ENCODE measurements at regions of chr7 and their contacts with region 1.

Region 1: DNA sequence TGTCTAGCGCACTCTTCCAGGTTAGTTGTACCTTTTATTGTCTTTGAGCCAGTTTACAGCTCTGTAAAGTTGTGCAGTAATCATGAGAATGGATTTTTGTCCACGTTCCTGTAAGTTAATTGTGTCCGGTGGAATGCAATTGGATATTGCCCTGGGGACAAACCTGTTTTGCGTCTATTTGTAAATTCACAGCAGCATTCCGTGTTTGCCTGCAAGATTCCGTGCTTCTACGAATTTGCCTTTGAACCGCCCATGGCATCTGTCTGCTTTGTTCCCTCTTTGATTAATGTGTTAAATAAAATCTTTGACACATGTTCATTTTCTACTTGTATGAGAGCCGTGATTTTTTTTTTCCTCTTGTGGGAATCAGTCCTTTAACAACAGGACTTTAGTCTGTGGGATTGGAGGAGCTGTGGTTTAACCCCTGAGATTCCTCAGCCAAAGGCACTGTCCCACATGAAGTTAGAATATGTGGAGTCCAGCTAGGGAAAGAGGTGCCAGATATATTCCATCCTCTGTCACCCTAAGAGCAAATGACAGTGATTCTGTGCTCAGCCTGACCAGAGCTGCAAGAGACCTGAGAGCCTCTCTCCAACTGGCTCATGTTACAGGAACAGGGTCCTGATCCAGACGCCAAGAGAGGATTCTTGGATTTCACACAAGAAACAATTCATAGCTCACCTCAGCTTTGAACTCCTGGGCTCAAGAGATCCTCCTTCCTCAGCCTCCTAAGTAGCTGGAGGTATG is 126.3 kb downstream of the COL26A1 start:
- DNase-seq: peak; percentile 62 to 78
- H3K4me3 ChIP-seq: no peak overlapping the region
- H3K27ac ChIP-seq: no peak overlapping the region
- H3K4me1 ChIP-seq: peaks cover 8% of the 10 kb centered on the region; the same call in 1 of the 2 replicates
- H3K27me3 ChIP-seq: peaks cover 19% of the 10 kb centered on the region; the same call in 1 of the 2 replicates
- CTCF ChIP-seq: no peak

Region 2: GRCh38 chr7:101308245-101309085 is 180.5 kb before region 1 on chr7:
- CTCF ChIA-PET with region 1: interaction called, 10 read pairs
- POLR2A ChIA-PET with region 1: no interaction called
- intact Hi-C with region 1: no loop called
- DNase-seq: peak; percentile 74 to 76
- H3K4me3 ChIP-seq: peak overlapping the region; percentile 95
- H3K27ac ChIP-seq: no peak overlapping the region
- H3K4me1 ChIP-seq: no peaks in the 10 kb centered on the region
- H3K27me3 ChIP-seq: no peaks in the 10 kb centered on the region
- CTCF ChIP-seq: no peak

Region 3: GRCh38 chr7:101474178-101474577 is 14.8 kb before region 1 on chr7:
- CTCF ChIA-PET with region 1: no interaction called
- POLR2A ChIA-PET with region 1: no interaction called
- intact Hi-C with region 1: no loop called
- DNase-seq: no peak
- H3K4me3 ChIP-seq: no peak overlapping the region
- H3K27ac ChIP-seq: no peak overlapping the region
- H3K4me1 ChIP-seq: no peaks in the 10 kb centered on the region
- H3K27me3 ChIP-seq: peaks cover 62% of the 10 kb centered on the region
- CTCF ChIP-seq: no peak

Region 4: GRCh38 chr7:101792051-101792681 is 303.2 kb after region 1 on chr7:
- CTCF ChIA-PET with region 1: interaction called, 14 read pairs
- POLR2A ChIA-PET with region 1: no interaction called
- intact Hi-C with region 1: no loop called
- DNase-seq: peak; percentile 66 to 84
- H3K4me3 ChIP-seq: no peak overlapping the region; the same call in 1 of the 2 replicates
- H3K27ac ChIP-seq: peak overlapping the region; percentile 89
- H3K4me1 ChIP-seq: peaks cover 21% of the 10 kb centered on the region
- H3K27me3 ChIP-seq: no peaks in the 10 kb centered on the region
- CTCF ChIP-seq: no peak